ENCODE measurements at regions of chr20 and their contacts with region 1.

Region 1: GRCh38 chr20:25178563-25179438 is 16.7 kb upstream of the ENTPD6 start:
- DNase-seq: peak; percentile 12 to 36 (median 21)
- ATAC-seq: peak; percentile 84
- H3K4me3 ChIP-seq: no peak overlapping the region
- H3K27ac ChIP-seq: no peak overlapping the region
- H3K4me1 ChIP-seq: peaks cover 0 to 3% of the 10 kb centered on the region in 2 experiments; a peak in 1 of 5 replicates
- H3K27me3 ChIP-seq: 0 out of 5 replicates have a peak, but pooled peaks cover 0 to 8% of the 10 kb centered on the region in 2 experiments
- CTCF ChIP-seq: peak; percentile 60 to 78 (median 76); a peak in 5 of 6 replicates
- EP300 ChIP-seq: no peak
- POLR2A ChIP-seq: no peak
- RAD21 ChIP-seq: peak; percentile 55 to 71

Region 2: GRCh38 chr20:25000268-25000821 is 178.5 kb before region 1 on chr20:
- CTCF ChIA-PET with region 1: interaction called, 12 read pairs
- POLR2A ChIA-PET with region 1: no interaction called
- in situ Hi-C with region 1: loop called (anchors 10 kb)
- intact Hi-C with region 1: loop called (anchors 2 kb)
- DNase-seq: no peak
- ATAC-seq: no peak
- H3K4me3 ChIP-seq: no peak overlapping the region
- H3K27ac ChIP-seq: no peak overlapping the region
- H3K4me1 ChIP-seq: no peaks in the 10 kb centered on the region
- H3K27me3 ChIP-seq: peaks cover 0 to 7% of the 10 kb centered on the region in 2 experiments; a peak in 3 of 5 replicates
- CTCF ChIP-seq: no peak
- EP300 ChIP-seq: no peak
- POLR2A ChIP-seq: no peak
- RAD21 ChIP-seq: no peak

Region 3: GRCh38 chr20:25076731-25077609 is 101.8 kb before region 1 on chr20:
- CTCF ChIA-PET with region 1: no interaction called
- POLR2A ChIA-PET with region 1: no interaction called
- in situ Hi-C with region 1: no loop called
- intact Hi-C with region 1: loop called (anchors 10 kb)
- DNase-seq: no peak
- ATAC-seq: peak; percentile 61; the same call in 1 of the 3 replicates
- H3K4me3 ChIP-seq: no peak overlapping the region
- H3K27ac ChIP-seq: no peak overlapping the region
- H3K4me1 ChIP-seq: no peaks in the 10 kb centered on the region; a peak in 1 of 5 replicates
- H3K27me3 ChIP-seq: peaks cover 0 to 12% of the 10 kb centered on the region in 2 experiments; a peak in 3 of 5 replicates
- CTCF ChIP-seq: peak in 2 of 3 experiments; percentile 21; a peak in 2 of 6 replicates
- EP300 ChIP-seq: no peak
- POLR2A ChIP-seq: no peak
- RAD21 ChIP-seq: no peak

Measured in K562 (cell line).